ENCODE measurements at regions of chr9 and their contacts with region 1.

Region 1: GRCh38 chr9:90642570-90643539 is at the start of gene DIRAS2:
- DNase-seq: peak; percentile 78
- ATAC-seq: peak; percentile 98
- H3K4me3 Mint-ChIP-seq: peak within 1 kb of the TSS; percentile 84
- H3K27ac Mint-ChIP-seq: no peak within 1 kb of the TSS
- H3K4me1 Mint-ChIP-seq: peaks cover 12% of the 10 kb centered on the region
- H3K27me3 Mint-ChIP-seq: peaks cover 29% of the 10 kb centered on the region
- CTCF ChIP-seq: no peak
- total RNA-seq, gene DIRAS2: 0.27 to 0.35 TPM (median 0.34 TPM) in 3 replicates

Region 2: GRCh38 chr9:90322296-90322695 is 320.6 kb before region 1 on chr9:
- CTCF ChIA-PET with region 1: interaction called, 22 read pairs
- POLR2A ChIA-PET with region 1: no interaction called
- DNase-seq: no peak
- ATAC-seq: no peak
- H3K4me3 Mint-ChIP-seq: no peak overlapping the region
- H3K27ac Mint-ChIP-seq: no peak overlapping the region
- H3K4me1 Mint-ChIP-seq: peaks cover 7% of the 10 kb centered on the region
- H3K27me3 Mint-ChIP-seq: no peaks in the 10 kb centered on the region
- CTCF ChIP-seq: no peak

Region 3: DNA sequence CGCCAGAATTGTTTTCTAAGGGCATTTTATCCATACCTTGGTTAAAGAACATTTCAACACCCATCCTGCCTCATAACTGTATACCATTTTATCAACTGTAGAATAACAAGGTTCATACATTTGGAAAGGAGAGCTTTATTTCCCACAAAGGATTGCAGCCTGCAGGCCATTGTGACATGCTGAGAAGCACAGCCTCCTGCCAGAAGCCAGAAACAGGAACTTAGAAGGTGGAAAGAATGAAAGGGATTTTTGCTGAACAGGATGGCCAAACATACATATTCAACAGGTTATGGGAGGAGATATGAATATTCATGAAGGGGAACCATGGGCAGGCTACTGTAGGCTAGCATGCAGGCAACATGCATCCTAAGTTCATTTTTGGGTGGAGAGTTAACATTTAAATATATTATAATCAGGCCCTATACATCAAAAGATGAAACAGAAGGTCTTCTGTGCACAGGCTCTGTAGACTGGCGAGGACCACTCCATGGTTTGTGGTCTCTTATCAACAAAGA is 59.6 kb after region 1 on chr9:
- CTCF ChIA-PET with region 1: no interaction called
- POLR2A ChIA-PET with region 1: no interaction called
- DNase-seq: no peak
- ATAC-seq: no peak
- H3K4me3 Mint-ChIP-seq: no peak overlapping the region
- H3K27ac Mint-ChIP-seq: no peak overlapping the region
- H3K4me1 Mint-ChIP-seq: 0 out of 2 replicates have a peak, but pooled peaks cover 2% of the 10 kb centered on the region
- H3K27me3 Mint-ChIP-seq: 0 out of 2 replicates have a peak, but pooled peaks cover 2% of the 10 kb centered on the region
- CTCF ChIP-seq: no peak

Measured in WTC11 (cell line).